Right ventricle myocardium inferior (tissue), 1 donor: ENCODE measurements at regions of chr20 and their contacts with region 1.

Region 1: DNA sequence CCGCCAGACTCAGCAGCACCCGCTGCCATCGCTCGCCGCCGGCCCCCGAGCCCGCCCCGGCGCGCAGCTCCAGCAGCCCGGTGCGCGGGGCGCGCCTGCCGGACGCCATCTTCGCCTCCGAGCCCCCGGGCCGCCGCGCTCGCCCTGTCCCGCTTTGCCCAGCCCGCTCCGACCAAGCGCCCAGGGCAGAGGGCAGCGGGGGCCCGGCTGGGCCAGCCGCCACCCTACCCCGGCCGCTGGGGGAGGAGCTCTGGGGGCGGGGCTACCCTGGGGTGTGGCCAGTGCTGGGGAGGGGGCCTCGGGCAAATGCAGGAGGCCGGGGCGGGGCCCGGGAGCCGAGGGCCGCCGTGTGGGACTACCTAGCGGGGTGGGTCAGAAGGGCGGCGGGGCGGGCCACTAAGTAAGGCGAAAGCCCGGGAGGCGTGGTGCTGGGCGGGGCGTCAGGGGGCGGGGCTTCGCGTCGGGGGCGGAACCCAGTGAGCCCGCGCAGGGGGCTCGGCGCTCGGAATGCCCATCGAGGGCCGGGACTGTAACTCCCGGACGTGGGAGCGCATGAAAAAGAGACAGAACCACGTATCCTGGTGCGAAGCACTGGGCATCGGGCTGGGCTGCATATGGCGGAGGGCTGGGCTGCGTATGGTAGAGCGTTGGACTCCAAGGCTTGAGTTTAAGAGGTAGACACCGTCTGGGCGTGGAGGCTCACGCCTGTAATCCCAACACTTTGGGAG is at the start of gene SNTA1:
- DNase-seq: peak; percentile 98
- ATAC-seq: peak; percentile 93
- total RNA-seq, gene SNTA1: 199 TPM

Region 2: DNA sequence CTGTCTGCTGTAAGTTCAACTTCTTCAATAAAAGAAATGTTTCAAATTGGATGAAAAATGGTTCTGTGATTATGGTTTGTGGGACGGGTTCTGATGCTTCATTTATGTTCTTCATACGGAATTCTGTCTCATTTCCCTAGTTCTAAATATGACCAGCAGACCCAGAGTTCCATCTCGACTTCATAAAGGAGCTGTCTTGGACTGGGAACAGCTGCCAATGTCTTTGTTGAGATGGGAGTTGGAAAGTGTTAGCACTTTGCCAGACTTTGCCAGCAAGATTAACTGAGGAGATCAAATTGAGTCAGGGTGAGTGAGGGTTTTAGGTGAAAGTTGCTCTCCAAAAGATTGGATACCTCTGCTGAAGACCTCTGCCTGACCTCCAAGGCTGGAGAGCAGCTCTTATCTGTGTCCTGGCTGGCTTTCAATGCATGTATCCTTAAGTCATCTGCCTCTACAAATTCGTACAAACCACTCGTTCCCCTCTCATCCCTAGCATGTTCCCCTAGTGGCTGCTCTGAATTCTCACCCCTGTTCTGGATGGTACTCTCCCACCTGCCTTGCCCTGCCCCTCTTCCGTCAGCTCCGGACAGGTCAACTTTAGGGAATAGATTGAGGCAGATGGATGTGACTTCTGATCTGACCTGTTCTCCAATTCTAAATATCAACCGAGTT is 584.8 kb before region 1 on chr20 and contains the start of gene EFCAB8:
- intact Hi-C with region 1: no loop called
- DNase-seq: no peak
- ATAC-seq: peak; percentile 26
- total RNA-seq, gene EFCAB8: 0.43 TPM

Region 3: DNA sequence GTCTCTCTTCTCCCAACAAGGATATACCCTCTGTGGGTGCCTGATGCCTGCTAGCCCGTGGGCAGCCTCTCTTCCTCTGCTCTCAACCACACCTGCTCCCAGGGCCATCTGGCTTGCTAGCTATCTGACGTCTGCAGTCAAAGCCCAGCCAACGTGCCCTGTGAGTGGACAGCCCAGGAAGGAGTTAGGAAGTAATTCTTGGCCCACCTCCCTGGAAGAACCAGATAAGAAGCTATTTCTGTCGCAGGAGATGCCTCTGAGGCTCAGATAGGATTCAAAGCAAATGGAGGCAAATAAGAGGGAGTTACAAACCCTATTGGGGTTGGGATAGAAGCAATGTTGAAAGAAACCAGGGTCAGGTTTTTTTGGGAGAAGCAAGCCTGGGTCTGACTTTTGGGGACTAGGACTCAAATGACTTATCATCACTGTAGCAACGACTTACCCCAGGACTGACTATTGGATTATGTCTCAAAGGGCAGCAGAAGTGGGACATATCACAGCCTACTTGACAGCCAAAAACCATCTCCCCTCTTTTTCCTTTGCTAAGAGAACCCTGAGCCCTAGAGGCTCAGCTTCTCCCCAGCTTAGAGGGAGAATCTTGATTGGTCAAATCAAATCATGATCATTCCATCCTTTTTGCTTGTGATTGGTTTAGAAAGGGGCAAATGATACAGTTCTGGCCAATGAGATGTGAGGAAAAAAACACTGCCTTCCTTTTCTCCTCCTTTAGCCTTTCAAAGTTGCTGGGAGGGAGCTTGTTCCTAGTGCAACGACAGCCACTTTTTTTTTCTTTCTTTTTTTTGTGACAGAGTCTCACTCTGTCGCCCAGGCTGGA is 24.3 kb before region 1 on chr20:
- intact Hi-C with region 1: loop called (anchors 1 kb)
- DNase-seq: peak; percentile 78
- ATAC-seq: peak; percentile 69